Mammary epithelial cell (primary cell): ENCODE measurements at regions of chr3 and their contacts with region 1.

Region 1: GRCh38 chr3:49158108-49158709 is 7.9 kb downstream of the CCDC71 start:
- DNase-seq: no peak
- H3K4me3 ChIP-seq: no peak overlapping the region
- H3K27ac ChIP-seq: no peak overlapping the region
- H3K4me1 ChIP-seq: no peaks in the 10 kb centered on the region
- H3K27me3 ChIP-seq: no peaks in the 10 kb centered on the region
- CTCF ChIP-seq: peak; percentile 34 to 56

Region 2: DNA sequence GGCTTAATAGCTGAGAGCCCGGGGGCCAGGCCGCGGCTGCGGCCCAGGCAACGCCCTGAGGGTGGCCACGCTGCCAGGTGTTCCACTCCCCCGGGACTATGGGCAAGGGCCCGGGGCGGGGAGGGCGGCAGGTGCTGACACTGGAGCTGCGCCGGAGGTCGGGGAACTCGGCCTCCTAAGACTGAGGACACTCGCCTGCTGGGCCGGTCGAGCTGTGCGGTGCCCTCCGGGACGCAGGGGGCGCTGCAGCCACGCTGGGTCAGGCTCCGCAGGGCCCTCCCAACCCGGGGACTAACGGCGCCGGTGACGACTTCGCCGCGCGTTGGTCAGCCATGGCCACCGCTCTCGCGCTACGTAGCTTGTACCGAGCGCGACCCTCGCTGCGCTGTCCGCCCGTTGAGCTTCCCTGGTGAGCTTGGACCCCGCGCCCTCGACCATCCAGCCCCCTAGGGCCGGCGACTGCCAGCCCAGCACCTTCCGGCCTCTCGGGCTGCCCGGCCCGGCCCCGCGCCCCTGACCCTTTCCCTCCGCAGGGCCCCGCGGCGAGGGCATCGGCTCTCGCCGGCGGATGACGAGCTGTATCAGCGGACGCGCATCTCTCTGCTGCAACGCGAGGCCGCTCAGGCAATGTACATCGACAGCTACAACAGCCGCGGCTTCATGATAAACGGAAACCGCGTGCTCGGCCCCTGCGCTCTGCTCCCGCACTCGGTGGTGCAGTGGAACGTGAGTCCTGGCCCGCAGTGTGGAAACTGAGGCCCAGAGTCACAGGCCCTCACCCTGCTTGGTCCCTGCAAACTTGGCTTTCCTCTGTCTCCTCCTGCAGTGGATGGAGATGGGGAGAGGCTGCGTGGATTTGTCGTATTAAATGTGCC is 136.2 kb before region 1 on chr3 and contains the start of gene NDUFAF3:
- CTCF ChIA-PET with region 1: no interaction called
- dilution Hi-C with region 1: no loop called
- in situ Hi-C with region 1: no loop called
- intact Hi-C with region 1: loop called (anchors 5 kb)
- DNase-seq: peak; percentile 95
- H3K4me3 ChIP-seq: peak within 1 kb of the TSS; percentile 65 to 89 (median 86)
- H3K27ac ChIP-seq: peak within 1 kb of the TSS; percentile 89
- H3K4me1 ChIP-seq: peaks cover 34% of the 10 kb centered on the region
- H3K27me3 ChIP-seq: no peaks in the 10 kb centered on the region
- CTCF ChIP-seq: peak; percentile 75 to 97
- total RNA-seq, gene NDUFAF3: 27.0 to 83.6 TPM

Region 3: DNA sequence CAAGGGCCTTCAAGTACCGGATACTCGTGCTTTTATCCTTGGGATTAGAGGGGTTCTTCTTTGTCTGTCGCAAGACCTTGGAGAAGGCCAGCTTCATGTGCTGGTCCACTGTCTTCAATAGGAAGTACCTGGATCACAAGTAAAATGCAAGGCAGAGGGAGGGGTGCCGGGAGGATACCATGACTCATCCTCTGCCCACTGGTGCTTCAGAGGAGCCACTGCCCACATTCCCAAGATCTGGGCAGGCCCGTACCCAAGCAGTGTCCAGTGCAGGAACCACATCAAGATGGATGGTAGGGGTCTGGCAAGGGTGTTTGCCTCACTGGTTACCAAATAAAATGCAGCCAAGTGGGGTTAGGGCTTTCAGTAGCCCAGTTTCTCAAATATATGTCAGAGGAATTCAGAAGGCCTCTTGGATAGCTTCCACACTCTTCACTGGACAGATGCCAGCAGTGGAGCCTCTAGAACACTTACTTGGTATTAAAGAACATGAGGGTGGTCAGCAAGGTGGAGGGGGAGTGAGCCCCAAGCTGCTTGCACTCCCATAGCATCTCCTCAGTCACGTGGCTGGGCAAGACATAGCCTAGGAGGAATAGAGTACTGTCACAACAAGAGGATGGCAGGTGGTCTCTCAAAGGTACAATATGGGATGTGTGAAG is 125.4 kb before region 1 on chr3:
- CTCF ChIA-PET with region 1: no interaction called
- dilution Hi-C with region 1: no loop called
- in situ Hi-C with region 1: no loop called
- intact Hi-C with region 1: no loop called
- DNase-seq: peak; percentile 29
- H3K4me3 ChIP-seq: no peak overlapping the region
- H3K27ac ChIP-seq: no peak overlapping the region
- H3K4me1 ChIP-seq: peaks cover 26% of the 10 kb centered on the region
- H3K27me3 ChIP-seq: no peaks in the 10 kb centered on the region
- CTCF ChIP-seq: no peak

Region 4: DNA sequence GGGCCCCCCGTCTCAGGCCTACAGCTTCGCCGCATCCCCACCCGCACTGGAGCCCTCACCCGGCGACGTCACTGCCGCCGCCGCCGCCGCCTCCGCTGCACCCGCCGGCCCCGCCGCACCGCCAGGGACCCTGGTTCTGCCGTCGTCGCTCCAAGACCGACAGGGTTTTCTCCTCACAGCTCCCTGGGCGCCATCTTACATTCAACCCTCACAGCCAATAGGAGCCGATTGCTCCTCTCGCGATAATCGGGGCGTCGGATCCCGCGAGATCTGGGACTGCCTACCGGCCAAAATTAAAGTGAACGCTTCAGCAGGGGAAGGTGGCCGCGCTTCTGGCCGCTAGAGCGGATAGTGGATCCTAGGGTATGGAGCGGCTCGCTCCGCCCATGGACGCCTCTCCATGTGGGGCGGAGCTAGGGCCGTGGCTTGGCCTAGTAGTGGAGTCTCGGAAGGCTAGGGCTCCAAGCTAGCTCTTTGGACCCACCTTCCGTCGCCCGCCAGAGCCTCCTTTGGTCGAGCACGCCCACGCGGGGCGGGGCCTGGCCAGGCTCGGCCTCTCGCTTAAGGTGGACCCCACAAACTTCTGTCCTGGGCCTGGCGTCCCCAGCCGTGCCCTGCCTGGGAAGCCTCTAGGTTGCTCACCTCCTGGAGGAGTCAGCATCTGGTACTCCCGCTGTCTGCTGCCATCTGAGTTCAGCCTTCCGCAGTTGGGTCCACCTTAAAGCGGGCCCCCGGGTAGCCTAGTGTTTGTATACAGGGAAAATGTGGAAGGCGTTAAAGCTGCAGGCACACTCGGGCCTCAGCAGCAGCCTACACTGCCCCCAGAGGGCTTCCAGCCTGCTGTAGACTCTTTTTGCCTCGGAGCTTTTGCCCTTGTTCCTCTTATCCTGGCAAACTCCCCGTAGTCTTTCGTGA is 64.1 kb before region 1 on chr3 and contains the start of gene QRICH1:
- CTCF ChIA-PET with region 1: no interaction called
- dilution Hi-C with region 1: no loop called
- in situ Hi-C with region 1: no loop called
- intact Hi-C with region 1: no loop called
- DNase-seq: peak; percentile 99
- H3K4me3 ChIP-seq: peak within 1 kb of the TSS; percentile 72 to 84 (median 80)
- H3K27ac ChIP-seq: peak within 1 kb of the TSS; percentile 90
- H3K4me1 ChIP-seq: peaks cover 11% of the 10 kb centered on the region
- H3K27me3 ChIP-seq: no peaks in the 10 kb centered on the region
- CTCF ChIP-seq: peak; percentile 65 to 66
- total RNA-seq, gene QRICH1: 88.7 to 89.7 TPM

Region 5: GRCh38 chr3:49104483-49105291 is 53.5 kb before region 1 on chr3 and contains the start of gene QARS1:
- CTCF ChIA-PET with region 1: no interaction called
- dilution Hi-C with region 1: no loop called
- in situ Hi-C with region 1: no loop called
- intact Hi-C with region 1: loop called (anchors 2 kb)
- DNase-seq: peak; percentile 85
- H3K4me3 ChIP-seq: peak within 1 kb of the TSS; percentile 72 to 75 (median 75)
- H3K27ac ChIP-seq: peak within 1 kb of the TSS; percentile 40
- H3K4me1 ChIP-seq: peaks cover 9% of the 10 kb centered on the region
- H3K27me3 ChIP-seq: no peaks in the 10 kb centered on the region
- CTCF ChIP-seq: no peak
- total RNA-seq, gene QARS1: 228 to 355 TPM